ENCODE measurements at regions of chr1 and their contacts with region 1.

Region 1: GRCh38 chr1:112803906-112804762 is 89.0 kb upstream of the PPM1J start:
- DNase-seq: no peak
- H3K4me3 ChIP-seq: no peak overlapping the region
- H3K27ac ChIP-seq: no peak overlapping the region
- H3K4me1 ChIP-seq: no peaks in the 10 kb centered on the region
- H3K27me3 ChIP-seq: no peaks in the 10 kb centered on the region
- CTCF ChIP-seq: peak in 3 of 4 experiments; percentile 11 to 54 (median 38)
- EP300 ChIP-seq: no peak
- POLR2A ChIP-seq: no peak

Region 2: GRCh38 chr1:112729909-112730308 is 74.2 kb before region 1 on chr1:
- intact Hi-C with region 1: loop called (anchors 5 kb)
- DNase-seq: no peak
- H3K4me3 ChIP-seq: no peak overlapping the region
- H3K27ac ChIP-seq: no peak overlapping the region
- H3K4me1 ChIP-seq: no peaks in the 10 kb centered on the region
- H3K27me3 ChIP-seq: no peaks in the 10 kb centered on the region
- CTCF ChIP-seq: no peak
- EP300 ChIP-seq: no peak
- POLR2A ChIP-seq: no peak